Activated naive CD4-positive, alpha-beta T cell treated with anti-CD3 and anti-CD28 coated beads for 36 hours (primary cell): ENCODE measurements at regions of chr20 and their contacts with region 1.

Region 1: GRCh38 chr20:62500237-62500864 is 24.6 kb upstream of the GATA5 start:
- DNase-seq: peak; percentile 87
- H3K4me3 Mint-ChIP-seq: no peak overlapping the region
- H3K27ac Mint-ChIP-seq: peak overlapping the region; percentile 69
- H3K4me1 Mint-ChIP-seq: peaks cover 29% of the 10 kb centered on the region
- H3K27me3 Mint-ChIP-seq: peaks cover 7% of the 10 kb centered on the region

Region 2: DNA sequence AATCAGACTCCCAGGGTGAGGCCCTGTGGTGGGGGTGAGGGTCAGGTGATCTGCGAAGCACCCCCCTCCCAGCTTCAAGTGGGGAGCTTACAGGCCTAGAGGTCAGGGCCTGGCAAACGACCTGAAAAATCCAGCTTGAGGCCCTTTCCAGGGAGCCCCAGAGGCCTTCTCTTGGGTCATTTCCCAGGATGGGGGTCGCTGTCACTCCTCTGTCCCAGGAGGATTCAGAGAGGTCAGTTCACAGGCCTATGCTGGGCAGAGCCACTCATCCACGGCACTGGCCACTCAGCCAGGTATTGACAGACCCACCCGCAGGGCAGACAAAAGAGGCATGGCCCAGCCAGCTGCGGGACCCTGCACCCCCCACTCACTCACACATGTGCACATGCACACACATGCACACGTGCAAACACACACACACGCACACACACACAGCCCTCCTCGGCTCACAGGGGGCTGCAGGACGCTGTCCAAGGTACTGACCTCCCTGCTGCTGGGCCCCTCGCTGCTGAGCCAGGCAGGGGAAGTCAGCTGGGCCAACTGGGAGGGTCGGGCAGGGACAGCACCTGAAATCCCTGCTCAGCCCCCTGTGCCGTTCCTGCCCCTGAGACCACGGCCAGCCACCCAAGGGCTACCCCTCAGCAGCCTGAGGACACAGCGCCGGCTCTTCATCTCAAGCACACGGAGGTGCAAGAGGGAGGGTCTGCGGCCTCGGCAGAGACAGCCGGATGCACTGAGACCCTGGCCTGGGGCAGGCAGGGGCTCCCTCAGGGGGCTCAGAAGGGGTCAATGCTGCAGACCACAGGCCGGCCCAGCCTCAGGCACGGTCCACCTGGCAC is 548.4 kb before region 1 on chr20:
- CTCF ChIA-PET with region 1: no interaction called
- intact Hi-C with region 1: no loop called
- DNase-seq: no peak
- H3K4me3 Mint-ChIP-seq: no peak overlapping the region
- H3K27ac Mint-ChIP-seq: no peak overlapping the region
- H3K4me1 Mint-ChIP-seq: no peaks in the 10 kb centered on the region
- H3K27me3 Mint-ChIP-seq: peaks cover 20% of the 10 kb centered on the region

Region 3: GRCh38 chr20:62407221-62407992 is 92.9 kb before region 1 on chr20 and contains the start of gene CABLES2:
- CTCF ChIA-PET with region 1: interaction called, 3 read pairs
- intact Hi-C with region 1: loop called (anchors 5 kb)
- DNase-seq: peak; percentile 94
- H3K4me3 Mint-ChIP-seq: peak within 1 kb of the TSS; percentile 78
- H3K27ac Mint-ChIP-seq: peak within 1 kb of the TSS; percentile 80
- H3K4me1 Mint-ChIP-seq: peaks cover 31% of the 10 kb centered on the region
- H3K27me3 Mint-ChIP-seq: no peaks in the 10 kb centered on the region
- total RNA-seq, gene CABLES2: 3.6 to 5.1 TPM

Region 4: DNA sequence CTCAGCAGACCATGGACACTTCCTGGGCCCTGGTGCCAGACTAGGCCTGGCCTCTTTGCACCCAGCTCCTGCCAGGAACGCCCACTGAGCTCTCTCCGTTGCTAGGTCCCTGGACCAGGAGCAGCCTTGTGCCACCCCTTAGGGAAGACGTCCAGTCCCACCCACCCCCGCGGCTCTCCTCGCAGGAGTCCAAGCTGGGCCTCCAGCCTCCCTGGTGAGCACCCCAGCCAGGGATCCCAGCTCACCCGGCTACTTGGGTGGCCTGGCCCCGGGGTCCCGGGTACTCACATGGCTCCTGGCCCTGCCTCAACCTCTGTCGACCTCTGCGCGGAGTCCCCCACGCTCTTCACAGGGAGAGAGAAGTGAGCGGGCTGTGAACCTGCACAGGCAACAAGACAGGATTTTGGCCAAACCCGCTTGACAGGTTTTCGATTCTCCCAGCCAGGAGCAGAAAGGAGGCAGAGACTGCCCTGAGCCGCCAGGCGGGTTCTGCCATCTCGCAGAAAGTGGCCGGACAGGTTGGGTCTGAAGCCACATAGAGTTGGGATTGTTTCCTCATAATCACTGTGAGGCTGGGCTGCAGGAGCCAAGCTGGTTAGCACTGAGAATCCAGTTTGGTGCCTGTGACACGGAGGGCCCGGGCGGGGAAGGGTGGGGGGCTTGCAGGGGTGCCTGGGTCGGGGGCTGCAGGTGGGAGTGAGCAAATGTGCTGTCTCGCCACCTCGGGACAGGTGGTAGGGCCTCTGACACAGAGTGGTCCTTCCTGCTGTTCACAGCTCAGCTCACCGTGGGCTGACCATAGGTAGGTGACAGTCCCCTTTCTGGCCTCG is 73.0 kb before region 1 on chr20 and contains the start of gene RBBP8NL:
- CTCF ChIA-PET with region 1: no interaction called
- intact Hi-C with region 1: no loop called
- DNase-seq: no peak
- H3K4me3 Mint-ChIP-seq: no peak within 1 kb of the TSS
- H3K27ac Mint-ChIP-seq: no peak within 1 kb of the TSS
- H3K4me1 Mint-ChIP-seq: no peaks in the 10 kb centered on the region
- H3K27me3 Mint-ChIP-seq: peaks cover 5% of the 10 kb centered on the region
- total RNA-seq, gene RBBP8NL: not detected

Region 5: DNA sequence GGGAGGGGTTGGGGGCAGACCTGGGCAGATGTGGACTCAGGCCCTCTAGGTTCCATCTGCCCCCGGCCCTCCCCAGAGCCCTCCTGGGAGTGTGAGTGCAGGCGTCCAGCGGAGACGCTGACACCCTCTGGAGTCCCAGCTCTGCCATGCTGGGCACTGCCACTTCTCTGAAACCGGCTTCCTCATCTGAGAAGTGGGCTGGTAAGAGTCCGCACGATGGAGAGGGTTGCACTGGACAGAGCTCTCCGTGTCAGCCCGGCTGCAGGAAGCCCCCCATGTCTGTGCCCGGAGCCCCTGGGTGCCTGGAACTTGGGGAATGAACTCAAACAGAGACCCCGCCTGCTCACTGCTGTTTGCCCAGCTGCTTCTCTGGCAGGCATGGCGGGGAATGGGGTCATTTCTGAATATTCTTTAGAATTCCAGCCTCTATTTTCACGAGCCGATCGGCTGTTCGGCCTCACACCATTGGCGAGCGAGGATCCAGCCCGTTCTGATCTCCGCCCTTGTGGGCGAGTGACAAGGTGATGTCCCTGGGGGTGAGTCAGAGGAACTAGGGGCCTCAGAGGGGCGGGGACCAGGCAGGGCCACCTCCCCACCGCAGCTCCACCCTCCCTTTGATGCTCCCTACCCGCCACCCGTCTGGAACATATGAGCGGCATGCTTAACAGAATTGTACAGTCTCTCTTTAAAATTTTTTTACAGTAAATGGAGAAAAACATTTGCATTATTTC is 23.3 kb after region 1 on chr20:
- CTCF ChIA-PET with region 1: interaction called, 6 read pairs
- intact Hi-C with region 1: loop called (anchors 1 kb)
- DNase-seq: peak; percentile 90
- H3K4me3 Mint-ChIP-seq: no peak overlapping the region
- H3K27ac Mint-ChIP-seq: no peak overlapping the region
- H3K4me1 Mint-ChIP-seq: peaks cover 16% of the 10 kb centered on the region
- H3K27me3 Mint-ChIP-seq: peaks cover 7% of the 10 kb centered on the region

Region 6: DNA sequence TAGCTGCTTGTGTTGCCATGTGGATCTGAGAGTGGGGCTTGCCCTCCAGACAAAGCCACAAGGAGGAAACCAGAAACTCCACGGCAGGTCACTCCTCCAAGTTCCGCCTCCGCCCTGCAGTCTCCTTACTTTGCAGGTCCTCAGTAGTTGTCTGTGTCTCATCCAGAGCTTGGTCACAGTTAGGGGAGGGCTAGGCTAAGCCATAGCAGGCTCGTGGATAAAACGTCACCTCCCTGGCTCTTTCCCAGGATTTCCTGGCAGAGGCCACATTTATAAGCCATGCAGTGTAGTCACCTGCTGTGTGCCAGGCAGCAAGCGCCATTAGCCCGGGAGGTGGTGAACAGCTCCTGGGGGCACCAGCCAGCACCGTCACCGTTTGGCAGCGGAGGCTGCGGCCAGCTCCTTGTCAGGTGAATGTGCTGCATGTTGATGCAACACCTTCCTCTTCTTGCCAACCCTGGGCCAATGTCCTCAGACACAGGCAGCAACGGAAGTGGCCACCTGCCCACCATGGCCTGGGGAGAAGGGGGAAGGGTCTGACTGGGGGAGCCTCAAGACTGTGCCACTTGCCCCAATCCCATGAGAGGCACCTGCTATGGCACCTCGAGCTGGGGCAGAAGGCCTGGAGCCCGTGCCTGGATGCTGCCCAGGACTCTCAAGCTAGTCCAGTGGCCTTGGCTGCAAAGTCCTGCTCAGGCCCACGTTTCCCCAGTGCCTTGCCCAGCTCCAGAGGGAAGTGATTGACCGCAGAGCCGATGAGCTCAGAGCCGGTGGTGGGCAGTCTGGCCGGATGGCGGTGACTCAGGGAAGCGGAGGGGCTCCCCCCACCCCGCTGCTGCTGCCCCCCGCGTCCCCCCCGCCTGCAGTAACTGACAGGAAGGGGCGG is 102.9 kb after region 1 on chr20:
- CTCF ChIA-PET with region 1: interaction called, 4 read pairs
- intact Hi-C with region 1: loop called (anchors 1 kb)
- DNase-seq: peak; percentile 78
- H3K4me3 Mint-ChIP-seq: peak overlapping the region; percentile 51
- H3K27ac Mint-ChIP-seq: peak overlapping the region; percentile 32
- H3K4me1 Mint-ChIP-seq: peaks cover 20% of the 10 kb centered on the region
- H3K27me3 Mint-ChIP-seq: peaks cover 16% of the 10 kb centered on the region

Region 7: GRCh38 chr20:62616728-62617621 is 116.6 kb after region 1 on chr20:
- CTCF ChIA-PET with region 1: interaction called, 40 read pairs
- intact Hi-C with region 1: loop called (anchors 1 kb)
- DNase-seq: peak; percentile 85
- H3K4me3 Mint-ChIP-seq: peak overlapping the region; percentile 52
- H3K27ac Mint-ChIP-seq: peak overlapping the region; percentile 84
- H3K4me1 Mint-ChIP-seq: peaks cover 27% of the 10 kb centered on the region
- H3K27me3 Mint-ChIP-seq: no peaks in the 10 kb centered on the region

Region 8: GRCh38 chr20:62740286-62741141 is 240.2 kb after region 1 on chr20:
- CTCF ChIA-PET with region 1: no interaction called
- intact Hi-C with region 1: loop called (anchors 1 kb)
- DNase-seq: peak; percentile 86
- H3K4me3 Mint-ChIP-seq: peak overlapping the region; percentile 38
- H3K27ac Mint-ChIP-seq: peak overlapping the region; percentile 47
- H3K4me1 Mint-ChIP-seq: peaks cover 28% of the 10 kb centered on the region
- H3K27me3 Mint-ChIP-seq: no peaks in the 10 kb centered on the region

Region 9: DNA sequence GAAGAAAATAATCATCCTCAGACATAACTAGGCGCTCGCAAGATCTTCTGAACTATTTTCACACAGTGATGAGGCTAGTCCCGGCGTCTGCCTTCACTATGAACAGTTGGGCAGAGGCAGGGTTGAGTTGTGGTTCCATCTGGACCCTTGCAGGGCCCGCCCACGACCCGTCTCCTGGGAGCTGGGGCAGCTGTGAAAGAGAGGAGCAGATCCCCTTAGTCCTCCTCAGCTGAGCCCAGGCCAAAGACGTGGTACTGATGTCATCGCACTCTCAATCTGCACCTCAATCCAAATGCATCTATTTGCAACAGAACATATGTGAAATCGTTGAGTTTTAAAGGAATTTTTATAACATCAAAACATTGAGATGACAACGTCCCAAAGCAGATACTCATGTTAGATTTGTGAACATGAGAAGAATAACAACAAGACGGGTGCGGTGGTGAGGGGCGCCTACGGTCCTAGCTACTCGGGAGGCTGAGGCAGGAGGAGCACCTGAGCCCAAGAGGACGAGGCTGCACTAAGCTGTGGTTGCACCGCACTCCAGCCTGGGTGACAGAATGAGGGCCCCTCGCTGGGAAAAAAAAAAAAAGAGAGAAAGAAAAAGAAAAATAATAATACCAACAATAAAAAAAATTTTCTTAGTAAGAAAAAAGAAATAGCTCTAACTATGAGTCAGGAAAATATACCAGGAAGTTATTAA is 346.0 kb after region 1 on chr20:
- CTCF ChIA-PET with region 1: no interaction called
- intact Hi-C with region 1: no loop called
- DNase-seq: no peak
- H3K4me3 Mint-ChIP-seq: no peak overlapping the region
- H3K27ac Mint-ChIP-seq: no peak overlapping the region
- H3K4me1 Mint-ChIP-seq: no peaks in the 10 kb centered on the region
- H3K27me3 Mint-ChIP-seq: no peaks in the 10 kb centered on the region